GM12878 (cell line): ENCODE measurements at regions of chr3 and their contacts with region 1.

Region 1: GRCh38 chr3:141412087-141412935 is 44.0 kb downstream of the ZBTB38 start:
- DNase-seq: no peak
- ATAC-seq: peak; percentile 63
- H3K4me3 ChIP-seq: peak overlapping the region; percentile 57
- H3K27ac ChIP-seq: peak overlapping the region; percentile 92
- H3K4me1 ChIP-seq: peaks cover 63% of the 10 kb centered on the region
- H3K27me3 ChIP-seq: no peaks in the 10 kb centered on the region
- CTCF ChIP-seq: no peak
- EP300 ChIP-seq: no peak
- POLR2A ChIP-seq: 0 out of 2 replicates have a peak, but pooled peaks have one; percentile 34
- RAD21 ChIP-seq: no peak

Region 2: DNA sequence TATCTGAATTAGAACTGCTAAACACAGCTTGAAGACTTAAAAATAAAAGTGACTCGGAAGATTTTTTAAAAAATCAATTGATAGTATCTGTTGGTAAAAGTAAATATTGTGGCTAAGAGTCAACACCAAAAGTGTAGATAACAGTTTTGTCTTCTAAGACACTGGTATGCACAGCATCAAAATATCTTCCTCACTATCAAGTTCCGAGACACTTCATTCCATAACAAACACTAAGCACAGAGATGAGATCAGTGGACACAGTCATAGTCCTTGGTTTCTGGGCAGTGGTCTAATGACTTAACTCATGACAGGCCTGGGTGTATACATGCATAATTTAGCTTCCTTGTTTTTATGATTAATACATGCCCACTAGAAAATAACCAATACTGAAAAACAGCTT is 117.5 kb before region 1 on chr3:
- CTCF ChIA-PET with region 1: no interaction called
- POLR2A ChIA-PET with region 1: no interaction called
- RAD21 ChIA-PET with region 1: no interaction called
- SMC1A ChIA-PET with region 1: no interaction called
- in situ Hi-C with region 1: no loop called
- intact Hi-C with region 1: no loop called
- DNase-seq: no peak
- ATAC-seq: no peak
- H3K4me3 ChIP-seq: peak overlapping the region; percentile 8; the same call in 1 of the 2 replicates
- H3K27ac ChIP-seq: peak overlapping the region; percentile 57
- H3K4me1 ChIP-seq: peaks cover 7% of the 10 kb centered on the region
- H3K27me3 ChIP-seq: no peaks in the 10 kb centered on the region
- CTCF ChIP-seq: no peak
- EP300 ChIP-seq: no peak
- POLR2A ChIP-seq: no peak
- RAD21 ChIP-seq: no peak

Region 3: DNA sequence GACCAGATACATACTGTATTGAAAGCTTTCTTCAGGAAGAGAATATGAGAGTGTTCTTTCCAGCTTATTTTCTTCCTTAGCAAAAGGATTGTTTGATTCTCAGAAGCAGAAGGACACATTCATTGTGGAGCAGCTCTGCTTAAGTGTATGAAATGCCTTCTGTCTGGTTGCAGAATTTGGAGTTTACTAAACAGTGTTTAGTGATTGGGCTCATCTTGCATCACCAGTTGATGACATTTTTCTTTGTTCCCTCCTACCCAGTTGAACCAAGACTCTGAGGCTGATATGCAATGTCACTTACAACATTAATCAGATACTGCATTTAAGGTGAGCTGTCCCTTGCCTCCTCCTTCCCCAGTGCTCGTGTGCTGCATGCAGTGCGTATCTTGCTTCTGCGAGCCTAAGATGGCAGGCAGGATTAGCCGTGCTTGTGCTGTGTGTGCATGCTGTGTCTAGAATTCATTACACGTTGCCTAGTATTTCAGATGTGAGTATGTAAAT is 25.6 kb before region 1 on chr3:
- CTCF ChIA-PET with region 1: interaction called, 56 read pairs
- POLR2A ChIA-PET with region 1: interaction called, 453 read pairs
- RAD21 ChIA-PET with region 1: interaction called, 387 read pairs
- SMC1A ChIA-PET with region 1: interaction called, 573 read pairs
- in situ Hi-C with region 1: no loop called
- intact Hi-C with region 1: no loop called
- DNase-seq: no peak
- ATAC-seq: peak; percentile 58
- H3K4me3 ChIP-seq: peak overlapping the region; percentile 67
- H3K27ac ChIP-seq: peak overlapping the region; percentile 94
- H3K4me1 ChIP-seq: peaks cover 30% of the 10 kb centered on the region
- H3K27me3 ChIP-seq: no peaks in the 10 kb centered on the region
- CTCF ChIP-seq: no peak
- EP300 ChIP-seq: no peak
- POLR2A ChIP-seq: peak; percentile 93
- RAD21 ChIP-seq: no peak

Region 4: DNA sequence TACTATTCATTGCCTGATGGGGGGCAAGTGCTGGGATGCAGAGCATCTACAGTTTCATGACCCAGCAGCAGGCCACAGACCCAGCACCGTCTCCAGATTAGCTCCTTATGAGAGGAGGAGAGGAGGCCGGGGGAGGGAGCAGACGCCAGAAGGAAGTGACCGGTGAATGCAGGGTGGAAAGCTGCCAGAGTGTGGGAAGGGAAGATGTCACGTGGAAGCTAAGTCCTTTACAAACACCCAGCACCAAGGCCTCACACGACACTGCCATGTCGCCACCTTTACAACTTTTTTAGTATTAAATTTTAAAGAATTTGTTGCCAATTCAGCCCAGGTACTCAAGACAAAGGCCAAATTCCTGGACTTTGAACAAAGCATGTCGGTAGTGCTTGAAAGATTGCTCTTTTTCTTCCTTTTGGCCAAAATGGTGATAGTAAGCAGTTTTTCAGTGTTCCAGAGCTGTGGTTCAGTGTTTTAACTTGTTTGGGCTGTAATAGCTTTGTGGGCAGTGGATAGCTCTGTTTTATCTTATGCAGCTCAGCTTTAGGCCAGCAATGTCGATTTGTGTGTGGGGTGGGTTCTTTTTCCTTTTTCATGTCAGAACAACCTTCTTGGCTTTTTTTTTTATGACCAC is 14.2 kb after region 1 on chr3:
- CTCF ChIA-PET with region 1: interaction called, 29 read pairs
- POLR2A ChIA-PET with region 1: interaction called, 11 read pairs
- RAD21 ChIA-PET with region 1: interaction called, 6 read pairs
- SMC1A ChIA-PET with region 1: interaction called, 62 read pairs
- in situ Hi-C with region 1: no loop called
- intact Hi-C with region 1: no loop called
- DNase-seq: no peak
- ATAC-seq: no peak
- H3K4me3 ChIP-seq: no peak overlapping the region
- H3K27ac ChIP-seq: no peak overlapping the region
- H3K4me1 ChIP-seq: peaks cover 7% of the 10 kb centered on the region
- H3K27me3 ChIP-seq: no peaks in the 10 kb centered on the region
- CTCF ChIP-seq: no peak
- EP300 ChIP-seq: no peak
- POLR2A ChIP-seq: no peak
- RAD21 ChIP-seq: no peak

Region 5: GRCh38 chr3:141431411-141432378 is 19.4 kb after region 1 on chr3:
- CTCF ChIA-PET with region 1: interaction called, 8 read pairs
- POLR2A ChIA-PET with region 1: interaction called, 7 read pairs
- RAD21 ChIA-PET with region 1: interaction called, 5 read pairs
- SMC1A ChIA-PET with region 1: interaction called, 62 read pairs
- in situ Hi-C with region 1: no loop called
- intact Hi-C with region 1: no loop called
- DNase-seq: no peak
- ATAC-seq: no peak
- H3K4me3 ChIP-seq: no peak overlapping the region
- H3K27ac ChIP-seq: no peak overlapping the region
- H3K4me1 ChIP-seq: peaks cover 5% of the 10 kb centered on the region; the same call in 1 of the 2 replicates
- H3K27me3 ChIP-seq: no peaks in the 10 kb centered on the region
- CTCF ChIP-seq: no peak
- EP300 ChIP-seq: no peak
- POLR2A ChIP-seq: no peak
- RAD21 ChIP-seq: no peak